Right lobe of liver (tissue), 6 donors: ENCODE measurements at regions of chr5 and their contacts with region 1.

Region 1: DNA sequence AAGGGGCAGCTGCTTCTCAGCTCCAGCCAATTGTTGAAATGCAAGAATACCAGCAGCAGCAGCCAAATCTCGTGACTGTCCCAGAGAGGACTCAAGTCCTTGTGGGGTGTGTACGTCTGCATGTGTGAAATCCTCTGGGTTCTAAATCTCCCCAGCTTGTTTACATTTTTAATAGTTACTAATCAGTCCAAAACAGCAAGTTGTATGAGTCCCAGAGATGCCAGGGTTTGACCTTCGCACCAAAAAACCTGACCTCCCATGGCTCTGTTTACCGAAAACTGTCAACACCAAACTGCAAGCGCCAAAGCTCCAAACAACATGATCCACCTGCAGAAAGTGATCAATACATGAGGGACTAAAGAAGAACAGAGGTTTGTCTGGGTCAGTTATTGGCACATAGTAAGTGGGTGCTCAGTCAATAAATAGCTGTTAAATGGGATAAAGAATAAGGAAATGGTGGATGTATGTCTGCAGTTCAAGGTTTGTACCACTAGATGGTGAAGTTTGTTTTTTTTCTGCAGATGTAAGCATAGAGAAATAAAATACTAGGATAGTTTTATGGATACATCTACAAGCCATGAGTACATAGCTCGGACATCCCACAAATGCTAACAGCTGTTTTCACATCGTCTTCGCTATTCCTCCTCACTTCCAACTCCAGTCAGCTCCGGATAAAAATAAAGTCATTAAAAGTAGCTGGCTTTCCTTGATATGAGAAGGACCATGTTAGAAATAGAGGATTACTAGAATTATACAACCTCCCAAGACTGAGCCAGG is 85.3 kb upstream of the ADRB2 start:
- DNase-seq: peak; percentile 29 to 66 (median 55)
- ATAC-seq: peak; percentile 66 to 75 (median 71)
- H3K4me3 ChIP-seq: no peak overlapping the region
- H3K27ac ChIP-seq: peak overlapping the region in 1 of 3 donors; percentile 53
- H3K4me1 ChIP-seq: peaks cover 0 to 48% (median 17%) of the 10 kb centered on the region in 4 donors
- H3K27me3 ChIP-seq: no peaks in the 10 kb centered on the region
- CTCF ChIP-seq: peak; percentile 74 to 89 (median 76)
- POLR2A ChIP-seq: no peak

Region 2: DNA sequence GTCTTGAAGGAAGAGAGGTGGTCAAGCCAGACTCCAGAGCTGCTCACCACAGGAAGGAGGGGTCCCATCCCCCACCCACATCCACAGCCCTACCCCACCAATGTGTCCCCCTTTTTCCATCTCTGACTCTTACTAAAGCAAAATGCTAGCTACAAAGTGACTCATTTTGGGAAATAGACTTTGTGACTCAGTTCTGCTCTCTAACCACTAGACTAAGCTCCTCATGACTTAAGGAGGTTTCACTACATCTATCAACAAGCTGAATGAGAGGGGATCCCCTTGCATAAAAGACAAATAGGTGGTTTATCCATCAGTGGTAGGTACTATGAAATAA is 50.1 kb after region 1 on chr5:
- intact Hi-C with region 1: no loop called
- DNase-seq: no peak
- ATAC-seq: no peak
- H3K4me3 ChIP-seq: no peak overlapping the region
- H3K27ac ChIP-seq: no peak overlapping the region
- H3K4me1 ChIP-seq: no peaks in the 10 kb centered on the region
- H3K27me3 ChIP-seq: no peaks in the 10 kb centered on the region
- CTCF ChIP-seq: no peak
- POLR2A ChIP-seq: no peak

Region 3: DNA sequence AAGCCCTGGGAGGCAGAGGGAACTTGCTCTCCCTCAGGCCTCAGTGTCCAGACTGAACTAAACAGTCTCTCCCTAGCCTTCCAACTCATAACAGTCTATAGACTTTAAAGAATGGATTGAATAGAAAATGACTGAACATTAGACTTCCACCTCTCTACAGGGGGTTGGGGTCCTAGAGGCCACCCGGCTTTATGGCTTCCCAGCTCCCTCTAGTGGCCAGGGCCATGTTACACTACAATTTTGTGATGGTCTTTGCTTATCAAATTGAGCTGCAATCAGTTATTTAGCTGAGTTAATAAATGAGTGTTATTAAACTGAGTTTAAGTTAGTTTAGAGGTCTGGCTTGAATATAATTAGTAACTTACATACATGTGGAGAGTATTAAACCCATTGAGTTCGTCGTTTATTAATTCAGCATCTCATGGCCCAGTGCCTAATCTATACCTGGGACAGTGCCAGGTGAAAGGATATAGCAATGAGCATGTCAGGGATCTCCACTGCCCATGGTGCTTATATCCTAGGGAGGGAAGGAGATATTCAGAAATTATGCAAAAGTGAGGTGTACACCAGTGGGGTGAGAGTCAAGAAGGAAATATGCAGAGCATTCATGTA is 216.5 kb after region 1 on chr5:
- intact Hi-C with region 1: loop called (anchors 10 kb)
- DNase-seq: no peak
- ATAC-seq: peak; percentile 22 to 50 (median 40)
- H3K4me3 ChIP-seq: no peak overlapping the region
- H3K27ac ChIP-seq: no peak overlapping the region
- H3K4me1 ChIP-seq: peaks cover 0 to 13% (median 4%) of the 10 kb centered on the region in 4 donors
- H3K27me3 ChIP-seq: no peaks in the 10 kb centered on the region
- CTCF ChIP-seq: peak; percentile 73 to 87 (median 82)
- POLR2A ChIP-seq: no peak

Region 4: DNA sequence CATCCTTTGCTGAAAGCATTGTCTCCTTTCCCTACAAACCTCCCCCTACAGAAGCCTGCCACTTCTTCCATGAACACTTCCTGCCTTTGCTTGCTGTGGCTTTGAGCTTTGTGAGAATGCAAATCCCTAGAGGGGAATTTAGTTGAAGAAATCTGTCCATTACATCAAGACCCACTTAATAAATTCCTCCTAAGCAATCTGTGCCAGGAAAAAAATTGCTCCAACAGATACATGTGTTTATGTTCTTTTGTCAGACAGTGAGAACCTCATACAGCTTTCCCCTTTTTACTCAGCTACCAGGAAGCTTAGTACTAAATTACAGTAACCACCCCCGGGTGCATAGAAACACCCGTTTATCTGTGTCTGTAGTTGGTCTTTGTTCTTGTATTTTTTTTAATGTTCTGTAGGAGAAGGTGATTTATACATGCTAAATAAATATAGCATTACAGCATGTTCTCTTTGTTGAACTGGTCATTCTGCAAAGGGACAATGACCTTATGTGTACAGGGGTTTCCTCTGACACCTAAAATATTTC is 277.8 kb after region 1 on chr5:
- intact Hi-C with region 1: no loop called
- DNase-seq: no peak
- ATAC-seq: peak; percentile 57 to 81 (median 72)
- H3K4me3 ChIP-seq: no peak overlapping the region
- H3K27ac ChIP-seq: no peak overlapping the region
- H3K4me1 ChIP-seq: peaks cover 0 to 22% (median 4%) of the 10 kb centered on the region in 4 donors
- H3K27me3 ChIP-seq: no peaks in the 10 kb centered on the region
- CTCF ChIP-seq: no peak
- POLR2A ChIP-seq: no peak

Region 5: GRCh38 chr5:149114403-149115312 is 373.5 kb after region 1 on chr5:
- intact Hi-C with region 1: loop called in 1 of 2 experiments (anchors 5 kb)
- DNase-seq: peak in 2 of 3 donors; percentile 36 to 66
- ATAC-seq: peak; percentile 99
- H3K4me3 ChIP-seq: no peak overlapping the region
- H3K27ac ChIP-seq: no peak overlapping the region
- H3K4me1 ChIP-seq: peaks cover 0 to 15% (median 0%) of the 10 kb centered on the region in 4 donors
- H3K27me3 ChIP-seq: no peaks in the 10 kb centered on the region
- CTCF ChIP-seq: peak; percentile 76 to 84 (median 78)
- POLR2A ChIP-seq: no peak